AG04449 (cell line): ENCODE measurements at regions of chr1 and their contacts with region 1.

Region 1: GRCh38 chr1:26993237-26994019 is at the start of gene TRNP1:
- DNase-seq: no peak
- H3K4me3 ChIP-seq: peak within 1 kb of the TSS; percentile 75
- CTCF ChIP-seq: no peak

Region 2: GRCh38 chr1:26744075-26744959 is 249.1 kb before region 1 on chr1:
- CTCF ChIA-PET with region 1: no interaction called
- POLR2A ChIA-PET with region 1: no interaction called
- DNase-seq: no peak
- H3K4me3 ChIP-seq: no peak overlapping the region; the same call in 1 of the 2 replicates
- CTCF ChIP-seq: no peak

Region 3: DNA sequence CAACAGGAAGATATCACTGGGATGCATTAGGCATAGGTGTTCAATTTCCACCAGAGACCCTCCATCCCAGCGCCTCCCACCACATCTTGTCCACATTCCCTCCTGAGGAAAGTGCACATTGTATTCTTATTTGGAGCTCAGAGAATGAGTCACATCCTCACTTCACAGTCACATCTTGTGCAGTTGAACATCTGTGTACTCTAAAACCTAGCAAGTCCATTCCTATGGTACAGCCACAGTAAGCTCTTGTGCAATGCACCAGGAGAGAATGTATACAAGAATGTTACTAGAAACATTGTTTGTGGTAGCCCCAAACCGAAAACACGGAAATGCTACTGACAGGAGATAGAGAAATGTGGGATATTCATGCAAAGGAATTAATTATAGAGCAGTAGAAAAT is 31.6 kb before region 1 on chr1:
- CTCF ChIA-PET with region 1: interaction called, 92 read pairs
- POLR2A ChIA-PET with region 1: interaction called, 4 read pairs
- DNase-seq: peak; percentile 81
- H3K4me3 ChIP-seq: no peak overlapping the region
- CTCF ChIP-seq: no peak

Region 4: DNA sequence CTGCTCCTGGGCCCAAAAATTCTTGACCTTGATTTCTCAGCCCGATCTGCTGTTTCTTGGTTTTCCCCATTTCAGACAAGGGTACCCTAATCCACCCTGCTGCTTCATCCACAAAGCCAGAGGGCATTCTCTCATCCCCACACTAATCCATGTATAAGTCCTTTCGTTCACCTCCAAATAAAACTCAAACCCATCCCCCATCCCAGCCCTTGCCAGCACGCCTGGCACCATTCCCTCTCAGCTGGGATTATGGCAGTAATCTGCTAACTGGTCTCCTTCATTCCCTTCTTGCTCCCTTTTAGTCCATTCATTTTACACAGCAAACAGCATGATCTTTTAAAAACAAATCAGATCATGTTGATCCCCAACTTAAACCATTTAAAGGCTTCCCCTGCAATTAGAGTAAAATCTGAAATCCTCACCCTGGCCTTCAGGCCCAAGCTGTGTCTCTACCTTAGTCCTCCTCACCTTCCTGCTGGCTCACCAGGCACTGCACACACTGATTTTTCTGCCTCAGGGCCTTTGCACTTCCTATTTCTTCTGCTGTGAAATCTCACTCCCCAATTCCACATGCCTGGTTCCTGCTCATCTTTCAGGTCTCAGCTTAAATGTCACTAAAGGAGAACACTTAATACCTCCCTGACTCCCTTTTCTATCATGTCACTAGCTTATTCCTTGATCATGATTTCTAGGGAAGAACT is 12.1 kb before region 1 on chr1:
- CTCF ChIA-PET with region 1: interaction called, 60 read pairs
- POLR2A ChIA-PET with region 1: no interaction called
- DNase-seq: no peak
- H3K4me3 ChIP-seq: no peak overlapping the region
- CTCF ChIP-seq: no peak

Region 5: DNA sequence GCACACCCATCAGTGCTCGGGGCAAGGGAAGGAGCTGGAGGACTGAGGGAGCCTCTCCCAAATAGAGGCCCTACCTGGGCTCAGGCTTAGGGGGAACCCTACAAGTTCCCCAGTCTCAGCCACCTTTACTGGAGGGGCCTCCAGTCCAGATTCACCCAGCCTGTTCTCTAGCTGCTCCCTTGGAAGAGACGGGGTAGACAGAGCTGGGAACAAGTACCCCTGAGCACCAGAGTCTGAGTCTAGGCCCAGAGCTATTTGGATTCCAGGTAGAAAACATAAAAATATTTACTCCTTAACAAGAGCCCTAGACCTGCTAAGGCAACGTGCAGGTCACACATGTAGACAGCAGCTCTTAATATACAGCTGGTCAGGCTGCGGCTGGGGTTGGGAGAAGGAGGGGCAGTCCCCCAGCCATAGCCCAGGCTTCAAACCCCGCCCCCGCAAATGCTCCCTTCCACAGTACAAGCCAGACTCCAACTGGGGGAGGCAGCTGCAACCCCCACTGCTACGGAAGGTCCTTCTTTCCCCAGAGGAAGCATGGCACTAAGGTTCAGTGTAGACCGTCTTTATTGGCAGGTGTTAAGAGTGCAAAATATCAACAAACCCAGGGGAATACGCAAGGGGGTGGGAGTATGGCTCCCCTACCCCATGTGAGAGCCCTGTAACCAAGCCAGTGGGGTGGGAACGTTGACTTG is 11.2 kb after region 1 on chr1:
- CTCF ChIA-PET with region 1: interaction called, 122 read pairs
- POLR2A ChIA-PET with region 1: interaction called, 5 read pairs
- DNase-seq: no peak
- H3K4me3 ChIP-seq: no peak overlapping the region
- CTCF ChIP-seq: no peak

Region 6: DNA sequence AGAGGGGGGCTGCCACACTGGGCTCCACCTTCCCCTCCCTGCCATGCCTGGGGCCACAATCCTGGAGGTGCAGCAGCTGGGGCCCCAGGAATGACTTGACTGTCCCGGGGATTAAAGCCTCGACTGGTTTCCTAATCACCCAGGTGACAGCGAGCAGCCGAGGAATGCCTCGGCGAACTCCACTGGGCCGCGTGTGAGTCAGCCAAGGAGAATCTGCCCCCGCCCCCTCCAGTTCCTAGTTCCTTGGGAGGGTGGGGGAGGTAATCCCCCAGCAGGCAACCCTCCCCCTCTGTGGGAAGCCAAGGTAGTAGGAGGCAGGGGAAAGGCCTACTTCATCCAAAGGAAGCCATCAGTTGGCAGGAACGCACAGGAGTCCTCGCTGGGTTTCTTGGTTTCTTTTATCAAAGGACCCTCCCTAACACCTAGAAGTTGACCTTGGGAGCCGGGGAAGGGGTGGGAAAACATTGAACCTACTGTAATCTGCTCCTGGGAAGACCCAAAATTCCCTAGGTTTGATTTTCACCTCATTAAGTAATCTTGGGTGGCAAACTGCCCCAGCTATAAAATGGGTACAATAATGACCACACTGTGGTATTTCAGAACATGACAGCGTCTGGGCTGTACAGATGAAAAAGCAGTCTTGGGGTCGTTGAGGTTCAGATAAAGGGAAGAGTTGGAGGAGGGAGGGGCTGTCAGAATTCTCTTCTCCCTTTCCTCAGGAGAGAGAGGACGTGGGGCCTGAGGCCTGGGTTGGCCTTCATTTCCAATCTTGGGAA is 17.7 kb after region 1 on chr1:
- CTCF ChIA-PET with region 1: interaction called, 122 read pairs
- POLR2A ChIA-PET with region 1: interaction called, 8 read pairs
- DNase-seq: no peak
- H3K4me3 ChIP-seq: peak overlapping the region; percentile 66
- CTCF ChIP-seq: no peak